Heart left ventricle (tissue), 16 donors: ENCODE measurements at regions of chr12 and their contacts with region 1.

Region 1: GRCh38 chr12:31589904-31590641 is 863 bp downstream of the DENND5B start:
- DNase-seq: peak; percentile 71 to 83 (median 80)
- ATAC-seq: peak; percentile 11 to 80 (median 69)
- H3K4me3 ChIP-seq: peak overlapping the region; percentile 65 to 98 (median 89)
- H3K27ac ChIP-seq: peak overlapping the region; percentile 91 to 98 (median 95)
- H3K4me1 ChIP-seq: peaks cover 0 to 41% (median 17%) of the 10 kb centered on the region in 12 donors
- H3K27me3 ChIP-seq: peaks cover 0 to 8% (median 0%) of the 10 kb centered on the region in 9 donors
- CTCF ChIP-seq: peak in 3 of 12 donors; percentile 9 to 37 (median 27)
- POLR2A ChIP-seq: peak in 1 of 2 donors; percentile 30

Region 2: GRCh38 chr12:31325877-31326631 is 264.0 kb before region 1 on chr12 and contains the start of gene SINHCAF:
- intact Hi-C with region 1: loop called in 1 of 10 experiments (anchors 5 kb)
- DNase-seq: peak; percentile 100
- ATAC-seq: peak; percentile 91 to 96 (median 94)
- H3K4me3 ChIP-seq: peak within 1 kb of the TSS; percentile 58 to 92 (median 76)
- H3K27ac ChIP-seq: peak within 1 kb of the TSS; percentile 20 to 93 (median 74)
- H3K4me1 ChIP-seq: peaks cover 0 to 35% (median 6%) of the 10 kb centered on the region in 12 donors
- H3K27me3 ChIP-seq: no peaks in the 10 kb centered on the region
- CTCF ChIP-seq: no peak
- POLR2A ChIP-seq: peak; percentile 62 to 94
- total RNA-seq, gene SINHCAF: 4.9 to 23.8 (median 13.9) TPM

Region 3: GRCh38 chr12:31431721-31432240 is 158.3 kb before region 1 on chr12:
- intact Hi-C with region 1: loop called in 1 of 10 experiments (anchors 5 kb)
- DNase-seq: no peak
- ATAC-seq: peak in 2 of 4 donors; percentile 18 to 22
- H3K4me3 ChIP-seq: no peak overlapping the region
- H3K27ac ChIP-seq: peak overlapping the region in 4 of 12 donors; percentile 5 to 41 (median 29)
- H3K4me1 ChIP-seq: peaks cover 0 to 11% (median 1%) of the 10 kb centered on the region in 12 donors
- H3K27me3 ChIP-seq: no peaks in the 10 kb centered on the region
- CTCF ChIP-seq: no peak
- POLR2A ChIP-seq: no peak

Region 4: GRCh38 chr12:31477687-31478086 is 112.4 kb before region 1 on chr12:
- intact Hi-C with region 1: loop called in 1 of 10 experiments (anchors 10 kb)
- DNase-seq: no peak
- ATAC-seq: no peak
- H3K4me3 ChIP-seq: no peak overlapping the region
- H3K27ac ChIP-seq: no peak overlapping the region
- H3K4me1 ChIP-seq: peaks cover 0 to 26% (median 4%) of the 10 kb centered on the region in 12 donors
- H3K27me3 ChIP-seq: no peaks in the 10 kb centered on the region
- CTCF ChIP-seq: no peak
- POLR2A ChIP-seq: no peak

Region 5: GRCh38 chr12:31524791-31525495 is 65.1 kb before region 1 on chr12:
- intact Hi-C with region 1: loop called in 2 of 10 experiments (anchors 5 to 10 kb)
- DNase-seq: no peak
- ATAC-seq: no peak
- H3K4me3 ChIP-seq: no peak overlapping the region
- H3K27ac ChIP-seq: no peak overlapping the region
- H3K4me1 ChIP-seq: peaks cover 0 to 66% (median 16%) of the 10 kb centered on the region in 12 donors
- H3K27me3 ChIP-seq: no peaks in the 10 kb centered on the region
- CTCF ChIP-seq: no peak
- POLR2A ChIP-seq: no peak

Region 6: DNA sequence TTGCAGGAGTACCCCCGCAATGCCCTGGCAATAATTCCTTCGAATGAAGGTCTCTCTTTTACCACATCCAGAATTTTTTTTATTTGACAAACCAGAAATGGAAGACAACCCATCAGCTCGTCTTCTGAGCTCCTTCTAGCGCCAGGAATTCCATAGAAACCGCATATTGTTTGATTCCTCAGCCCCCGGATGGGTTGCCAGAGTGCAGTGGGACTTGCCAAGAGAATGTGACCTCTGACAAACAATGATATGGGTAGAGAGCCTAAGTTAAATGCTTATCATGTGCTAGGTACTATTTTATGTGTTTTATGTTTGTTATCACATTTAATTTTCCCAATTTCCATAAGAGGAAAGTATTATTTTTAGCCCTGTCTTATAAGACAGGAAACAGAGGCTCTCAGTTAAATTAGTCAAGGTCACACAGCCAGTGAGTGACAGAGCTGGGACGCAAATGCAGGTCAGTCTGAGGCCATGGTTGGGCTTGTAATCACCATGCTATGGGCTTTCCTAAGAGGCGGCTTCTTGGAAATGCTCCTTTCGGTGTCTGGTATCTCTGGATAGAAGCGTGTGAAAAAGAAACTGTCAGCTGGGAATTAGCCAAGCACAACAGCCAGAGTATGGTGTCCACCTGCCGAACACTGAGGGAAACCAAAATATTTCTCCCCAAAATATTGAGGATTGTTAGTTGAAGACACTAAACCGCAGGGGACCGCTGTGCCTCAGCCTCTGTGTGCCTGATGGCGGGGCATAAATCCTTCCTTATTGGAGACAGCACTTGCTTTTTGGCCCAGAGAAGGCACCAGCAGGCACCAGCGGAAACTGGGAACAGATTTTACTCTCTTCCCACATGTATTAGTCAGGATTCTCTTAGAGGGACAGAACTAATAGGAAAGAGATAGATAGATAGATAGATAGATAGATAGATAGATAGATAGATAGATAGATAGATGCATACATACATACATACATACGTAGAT is 40.0 kb after region 1 on chr12:
- intact Hi-C with region 1: loop called in 5 of 10 experiments (anchors 2 to 5 kb)
- DNase-seq: peak in 4 of 5 donors; percentile 58 to 78 (median 64)
- ATAC-seq: peak; percentile 90 to 98 (median 96)
- H3K4me3 ChIP-seq: peak overlapping the region in 3 of 12 donors; percentile 19 to 24 (median 24)
- H3K27ac ChIP-seq: peak overlapping the region in 11 of 12 donors; percentile 37 to 65 (median 47)
- H3K4me1 ChIP-seq: peaks cover 0 to 17% (median 10%) of the 10 kb centered on the region in 12 donors
- H3K27me3 ChIP-seq: no peaks in the 10 kb centered on the region
- CTCF ChIP-seq: no peak
- POLR2A ChIP-seq: no peak

Region 7: GRCh38 chr12:31659087-31659933 is 69.2 kb after region 1 on chr12 and contains the start of gene ETFBKMT:
- intact Hi-C with region 1: no loop called
- DNase-seq: peak; percentile 86 to 91 (median 90)
- ATAC-seq: peak; percentile 88 to 96 (median 96)
- H3K4me3 ChIP-seq: peak within 1 kb of the TSS; percentile 28 to 92 (median 70)
- H3K27ac ChIP-seq: peak within 1 kb of the TSS; percentile 87 to 99 (median 93)
- H3K4me1 ChIP-seq: peaks cover 0 to 12% (median 6%) of the 10 kb centered on the region in 12 donors
- H3K27me3 ChIP-seq: no peaks in the 10 kb centered on the region
- CTCF ChIP-seq: peak in 11 of 12 donors; percentile 33 to 80 (median 46)
- POLR2A ChIP-seq: peak in 1 of 2 donors; percentile 32
- total RNA-seq, gene ETFBKMT: 3.1 to 7.4 (median 6.1) TPM